Left cardiac atrium (tissue), 4 donors: ENCODE measurements at regions of chr11 and their contacts with region 1.

Region 1: DNA sequence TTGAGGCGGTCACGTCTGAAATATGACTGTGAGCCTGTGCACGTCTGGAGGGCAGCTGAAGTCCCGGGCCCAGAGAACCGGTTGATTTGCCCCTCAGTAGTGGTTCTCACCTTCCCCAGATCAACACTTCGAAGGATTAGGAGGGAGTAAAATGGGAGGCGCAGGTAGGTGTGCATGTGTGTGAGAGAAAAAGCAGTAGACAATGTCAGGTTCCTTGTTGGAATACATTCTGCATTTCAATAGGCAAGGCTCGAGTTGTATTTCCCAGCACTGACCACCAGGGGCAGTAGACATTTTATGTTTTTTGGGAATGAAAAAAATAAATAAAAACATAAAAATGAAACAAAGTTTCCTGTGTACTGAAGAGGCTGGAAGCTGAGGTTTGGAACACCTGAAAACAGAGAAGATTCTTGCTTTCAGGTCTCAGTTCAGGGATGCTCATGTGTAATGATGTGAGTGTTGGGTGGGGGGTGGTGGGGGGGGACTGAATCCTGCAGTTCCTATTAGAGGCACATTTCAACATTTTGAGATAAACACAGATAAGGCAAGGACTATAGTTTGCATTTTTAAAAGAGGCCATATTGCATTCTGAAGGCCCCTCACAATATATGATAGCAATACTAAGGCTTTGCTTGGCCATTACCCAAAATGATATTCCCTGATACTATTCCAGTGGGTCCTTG is 333.9 kb downstream of the CADM1 start:
- DNase-seq: no peak
- ATAC-seq: no peak

Region 2: GRCh38 chr11:114977651-114978050 is 192.6 kb before region 1 on chr11:
- intact Hi-C with region 1: loop called in 1 of 2 experiments (anchors 10 kb)
- DNase-seq: no peak
- ATAC-seq: no peak

Region 3: DNA sequence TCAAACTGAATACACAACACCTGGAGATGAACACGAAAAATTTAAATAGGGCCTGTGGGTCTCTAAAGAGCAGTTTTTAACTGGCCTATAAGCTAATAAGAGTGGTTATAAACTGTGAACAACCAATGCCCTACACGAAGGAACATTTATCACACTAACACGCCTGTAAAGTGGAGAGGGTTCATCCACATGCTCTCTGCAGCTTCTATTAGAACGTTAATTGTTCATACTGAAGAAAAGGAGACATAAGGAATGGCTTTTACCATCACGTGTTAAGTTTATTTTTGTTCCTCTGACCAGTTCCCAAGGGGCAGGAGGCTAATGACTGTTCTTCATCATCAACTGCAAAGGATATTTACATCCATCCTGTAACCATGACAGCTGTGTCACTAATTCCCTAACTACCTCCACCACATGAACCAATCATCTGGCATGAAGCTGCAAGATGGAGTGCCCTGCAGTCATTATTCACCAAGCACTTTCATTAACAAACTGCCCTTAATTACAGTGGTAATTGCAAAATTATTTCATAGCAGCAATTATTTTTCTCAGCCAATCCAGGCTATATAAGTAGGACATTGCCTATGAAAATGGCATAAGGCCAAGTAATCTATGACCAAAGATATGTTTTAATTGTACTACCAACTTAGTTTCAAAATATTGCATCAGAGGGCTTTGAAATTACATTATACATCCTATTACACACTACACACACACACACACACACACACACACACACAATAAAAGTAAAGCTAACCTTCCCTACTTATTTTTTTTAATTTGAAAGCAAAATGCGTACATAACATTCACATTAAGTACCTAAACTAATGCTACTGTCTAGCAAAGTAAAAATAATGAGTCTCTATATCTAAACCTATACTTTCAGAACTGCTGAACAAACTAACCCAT is 147.3 kb after region 1 on chr11:
- intact Hi-C with region 1: loop called in 1 of 2 experiments (anchors 10 kb)
- DNase-seq: no peak
- ATAC-seq: no peak